Thyroid gland (tissue), 4 donors: ENCODE measurements at regions of chr11 and their contacts with region 1.

Region 1: GRCh38 chr11:3412837-3413236 is 33.9 kb upstream of the ZNF195 start:
- DNase-seq: no peak
- H3K4me3 ChIP-seq: no peak overlapping the region
- H3K27ac ChIP-seq: no peak overlapping the region
- H3K4me1 ChIP-seq: peaks cover 0 to 6% of the 10 kb centered on the region in 2 donors
- H3K27me3 ChIP-seq: no peaks in the 10 kb centered on the region
- CTCF ChIP-seq: no peak
- POLR2A ChIP-seq: no peak

Region 2: DNA sequence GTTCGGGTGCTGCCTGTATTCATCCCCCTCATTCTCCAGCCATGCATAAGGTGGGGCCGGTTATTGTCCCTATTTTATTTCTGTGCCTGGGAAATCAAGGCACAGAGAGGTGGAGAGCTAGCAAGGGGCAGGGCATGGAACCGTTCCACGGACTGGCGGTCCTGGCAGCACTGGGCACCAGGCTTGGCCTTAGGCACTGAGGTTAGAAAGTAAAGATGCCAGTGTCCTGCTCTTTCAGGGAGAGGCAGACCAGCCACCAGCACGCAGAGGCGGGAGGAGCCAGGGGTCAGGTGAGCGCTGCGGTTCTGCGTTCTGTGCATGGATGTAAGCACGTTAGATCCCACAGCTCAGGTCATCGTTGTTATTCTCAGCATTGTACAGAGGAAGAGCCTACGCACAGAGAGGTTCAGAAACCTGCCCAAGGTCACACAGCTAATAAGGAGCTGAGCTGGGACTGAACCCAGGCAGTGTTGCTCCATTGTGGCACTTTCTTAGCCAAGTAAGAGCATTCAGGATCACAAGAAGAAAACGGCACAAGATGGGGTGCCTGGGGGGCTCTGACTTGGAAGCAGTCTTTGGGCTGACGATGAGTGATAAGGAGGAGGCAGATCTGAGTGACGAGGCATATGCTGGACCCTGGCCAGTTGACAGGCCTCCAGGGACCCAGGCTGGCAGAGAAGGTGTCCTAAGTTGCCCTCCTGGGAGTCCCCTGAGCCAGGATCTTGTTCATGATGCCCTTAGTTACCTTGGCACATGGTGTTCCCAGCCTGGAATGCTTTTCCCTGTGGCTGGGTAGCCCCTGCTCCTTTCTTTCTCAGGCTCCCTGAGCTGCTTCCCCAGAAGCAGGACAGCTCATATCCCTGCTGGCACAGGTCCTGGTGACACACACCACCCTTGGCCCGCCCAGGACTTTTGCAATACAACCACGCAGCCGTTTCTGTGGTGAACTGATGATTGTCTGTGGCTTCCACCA is 288.8 kb before region 1 on chr11:
- intact Hi-C with region 1: no loop called
- DNase-seq: peak; percentile 46 to 49
- H3K4me3 ChIP-seq: no peak overlapping the region
- H3K27ac ChIP-seq: peak overlapping the region; percentile 41 to 66 (median 53)
- H3K4me1 ChIP-seq: peaks cover 3 to 33% of the 10 kb centered on the region in 2 donors
- H3K27me3 ChIP-seq: no peaks in the 10 kb centered on the region
- CTCF ChIP-seq: no peak
- POLR2A ChIP-seq: no peak

Region 3: GRCh38 chr11:3341298-3341697 is 71.5 kb before region 1 on chr11:
- intact Hi-C with region 1: loop called (anchors 10 kb)
- DNase-seq: peak; percentile 62 to 72
- H3K4me3 ChIP-seq: no peak overlapping the region
- H3K27ac ChIP-seq: no peak overlapping the region
- H3K4me1 ChIP-seq: no peaks in the 10 kb centered on the region
- H3K27me3 ChIP-seq: no peaks in the 10 kb centered on the region
- CTCF ChIP-seq: peak in 5 of 6 experiments; percentile 55 to 64 (median 60)
- POLR2A ChIP-seq: no peak